Endothelial cell of umbilical vein (primary cell): ENCODE measurements at regions of chr15 and their contacts with region 1.

Region 1: GRCh38 chr15:85296615-85297402 is 83.6 kb upstream of the AKAP13 start:
- DNase-seq: peak; percentile 85
- H3K4me3 ChIP-seq: no peak overlapping the region
- H3K27ac ChIP-seq: no peak overlapping the region
- H3K4me1 ChIP-seq: peaks cover 7% of the 10 kb centered on the region
- H3K27me3 ChIP-seq: peaks cover 0 to 2% of the 10 kb centered on the region in 2 experiments
- CTCF ChIP-seq: peak; percentile 62 to 71
- POLR2A ChIP-seq: no peak

Region 2: GRCh38 chr15:85318048-85318731 is 21.4 kb after region 1 on chr15:
- CTCF ChIA-PET with region 1: interaction called, 15 read pairs
- POLR2A ChIA-PET with region 1: no interaction called
- dilution Hi-C with region 1: no loop called
- intact Hi-C with region 1: no loop called
- DNase-seq: peak; percentile 74
- H3K4me3 ChIP-seq: no peak overlapping the region
- H3K27ac ChIP-seq: peak overlapping the region; percentile 64
- H3K4me1 ChIP-seq: peaks cover 15% of the 10 kb centered on the region
- H3K27me3 ChIP-seq: no peaks in the 10 kb centered on the region
- CTCF ChIP-seq: peak in 1 of 2 donors; percentile 16
- POLR2A ChIP-seq: no peak

Region 3: GRCh38 chr15:85403745-85404144 is 106.9 kb after region 1 on chr15:
- CTCF ChIA-PET with region 1: interaction called, 15 read pairs
- POLR2A ChIA-PET with region 1: no interaction called
- dilution Hi-C with region 1: no loop called
- intact Hi-C with region 1: no loop called
- DNase-seq: no peak
- H3K4me3 ChIP-seq: no peak overlapping the region
- H3K27ac ChIP-seq: no peak overlapping the region
- H3K4me1 ChIP-seq: peaks cover 56% of the 10 kb centered on the region
- H3K27me3 ChIP-seq: no peaks in the 10 kb centered on the region
- CTCF ChIP-seq: no peak
- POLR2A ChIP-seq: no peak

Region 4: DNA sequence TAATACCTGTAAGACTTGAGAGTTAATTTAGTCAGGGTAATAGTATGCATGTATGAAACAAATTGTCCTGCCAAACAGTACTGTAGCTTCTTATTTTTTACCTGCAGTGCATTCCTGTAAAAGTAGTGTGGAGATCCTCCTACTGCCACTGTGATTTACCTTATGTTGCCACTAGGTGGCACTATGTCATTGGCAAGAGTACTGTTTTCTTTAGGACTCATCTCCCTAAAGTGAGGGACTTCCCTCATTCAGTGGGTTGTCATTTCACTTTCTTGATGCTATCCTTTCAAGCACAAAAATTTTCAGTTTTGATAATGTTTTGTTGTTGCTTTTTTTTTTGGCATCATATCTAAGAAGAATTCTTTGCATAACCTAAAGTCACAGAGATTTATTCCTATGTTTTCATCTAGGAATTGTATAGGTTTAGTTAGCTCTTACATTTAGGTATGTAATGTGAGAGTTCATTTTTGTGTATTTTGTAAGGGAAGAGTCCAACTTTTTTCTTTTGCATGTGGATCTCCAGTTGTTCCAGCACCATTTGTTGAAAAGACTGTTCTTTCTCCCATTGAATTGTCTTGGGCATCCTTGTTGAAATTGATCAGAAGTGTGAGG is 189.3 kb after region 1 on chr15:
- CTCF ChIA-PET with region 1: interaction called, 18 read pairs
- POLR2A ChIA-PET with region 1: no interaction called
- dilution Hi-C with region 1: no loop called
- intact Hi-C with region 1: no loop called
- DNase-seq: peak; percentile 78
- H3K4me3 ChIP-seq: no peak overlapping the region
- H3K27ac ChIP-seq: no peak overlapping the region
- H3K4me1 ChIP-seq: peaks cover 4% of the 10 kb centered on the region
- H3K27me3 ChIP-seq: no peaks in the 10 kb centered on the region
- CTCF ChIP-seq: peak; percentile 58 to 69
- POLR2A ChIP-seq: no peak

Region 5: DNA sequence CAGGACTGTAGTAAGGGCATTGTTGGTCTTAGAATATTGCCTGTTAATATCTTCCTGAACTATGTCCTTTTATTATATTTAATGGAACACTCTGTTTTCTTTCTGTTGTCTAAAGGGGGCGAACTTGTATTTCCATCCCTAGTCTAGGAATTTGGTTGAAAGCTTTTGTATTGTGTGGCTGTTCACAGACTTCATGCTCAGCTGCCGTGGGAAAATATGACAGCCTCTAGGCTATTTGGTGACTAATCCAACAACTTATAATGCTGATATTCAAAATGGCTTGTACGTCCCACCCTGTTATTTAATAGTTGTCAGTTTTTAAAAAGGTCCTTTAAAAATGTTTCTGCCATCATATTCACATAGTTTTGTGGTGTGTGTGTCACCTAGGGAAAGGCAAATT is 295.3 kb after region 1 on chr15:
- CTCF ChIA-PET with region 1: interaction called, 10 read pairs
- POLR2A ChIA-PET with region 1: no interaction called
- dilution Hi-C with region 1: no loop called
- intact Hi-C with region 1: loop called (anchors 10 kb)
- DNase-seq: peak; percentile 93
- H3K4me3 ChIP-seq: no peak overlapping the region
- H3K27ac ChIP-seq: peak overlapping the region; percentile 60
- H3K4me1 ChIP-seq: peaks cover 11% of the 10 kb centered on the region
- H3K27me3 ChIP-seq: no peaks in the 10 kb centered on the region
- CTCF ChIP-seq: peak in 1 of 2 donors; percentile 23
- POLR2A ChIP-seq: no peak

Region 6: DNA sequence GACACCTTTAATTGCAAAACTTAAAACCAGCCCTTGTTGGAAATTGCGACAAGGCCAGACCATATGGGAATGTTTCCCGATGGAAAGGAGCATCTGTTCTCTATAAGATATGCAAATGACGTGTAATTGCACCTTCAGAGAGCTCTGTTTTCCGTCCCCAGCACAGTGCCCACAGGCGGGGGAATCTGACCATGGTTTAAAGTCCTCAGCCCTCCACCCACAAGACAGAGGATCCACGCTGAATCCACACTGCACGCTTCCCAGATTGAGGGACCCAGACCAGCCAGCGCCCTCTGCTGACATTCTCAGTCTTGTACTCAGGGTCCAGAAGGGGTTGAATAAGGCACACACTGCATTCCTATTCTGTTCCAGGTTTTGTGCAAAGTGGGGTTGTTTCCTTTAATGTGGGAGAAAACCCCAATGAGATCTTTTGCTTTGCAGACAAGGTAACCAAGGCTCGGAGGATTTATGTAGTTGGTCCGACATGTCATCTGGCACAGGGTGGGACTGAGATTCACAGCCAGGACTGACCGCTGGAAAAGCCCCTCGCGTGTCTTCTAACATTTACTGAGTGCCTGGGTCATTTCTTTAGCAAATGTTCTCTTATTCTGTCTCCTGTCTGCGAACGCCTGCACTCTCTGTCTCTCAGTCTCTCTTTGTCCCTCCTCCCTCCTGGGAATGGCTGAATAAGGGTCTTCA is 534.8 kb after region 1 on chr15:
- CTCF ChIA-PET with region 1: interaction called, 4 read pairs
- POLR2A ChIA-PET with region 1: no interaction called
- dilution Hi-C with region 1: no loop called
- intact Hi-C with region 1: loop called (anchors 2 kb)
- DNase-seq: peak; percentile 49
- H3K4me3 ChIP-seq: no peak overlapping the region
- H3K27ac ChIP-seq: no peak overlapping the region
- H3K4me1 ChIP-seq: no peaks in the 10 kb centered on the region
- H3K27me3 ChIP-seq: peaks cover 4 to 5% of the 10 kb centered on the region in 2 experiments
- CTCF ChIP-seq: peak; percentile 50 to 73
- POLR2A ChIP-seq: no peak